ENCODE measurements at regions of chr1 and their contacts with region 1.

Region 1: GRCh38 chr1:100459358-100460114 is 78.4 kb upstream of the GPR88 start:
- DNase-seq: peak; percentile 83
- ATAC-seq: peak; percentile 92
- H3K4me3 Mint-ChIP-seq: peak overlapping the region; percentile 37
- H3K27ac Mint-ChIP-seq: peak overlapping the region; percentile 69
- H3K4me1 Mint-ChIP-seq: peaks cover 57% of the 10 kb centered on the region
- H3K27me3 Mint-ChIP-seq: no peaks in the 10 kb centered on the region

Region 2: GRCh38 chr1:100352267-100353070 is 107.1 kb before region 1 on chr1 and contains the start of gene CDC14A:
- CTCF ChIA-PET with region 1: interaction called, 18 read pairs
- DNase-seq: peak; percentile 95
- ATAC-seq: peak; percentile 69
- H3K4me3 Mint-ChIP-seq: peak within 1 kb of the TSS; percentile 93
- H3K27ac Mint-ChIP-seq: peak within 1 kb of the TSS; percentile 98
- H3K4me1 Mint-ChIP-seq: peaks cover 35% of the 10 kb centered on the region
- H3K27me3 Mint-ChIP-seq: no peaks in the 10 kb centered on the region
- total RNA-seq, gene CDC14A: 34.2 to 43.1 TPM

Region 3: GRCh38 chr1:100443811-100444571 is 15.5 kb before region 1 on chr1:
- CTCF ChIA-PET with region 1: interaction called, 20 read pairs
- DNase-seq: peak; percentile 60
- ATAC-seq: peak; percentile 65
- H3K4me3 Mint-ChIP-seq: peak overlapping the region; percentile 78
- H3K27ac Mint-ChIP-seq: peak overlapping the region; percentile 95
- H3K4me1 Mint-ChIP-seq: peaks cover 82% of the 10 kb centered on the region
- H3K27me3 Mint-ChIP-seq: no peaks in the 10 kb centered on the region

Region 4: GRCh38 chr1:100543640-100544039 is 84.1 kb after region 1 on chr1:
- CTCF ChIA-PET with region 1: interaction called, 16 read pairs
- DNase-seq: peak; percentile 62
- ATAC-seq: peak; percentile 37
- H3K4me3 Mint-ChIP-seq: no peak overlapping the region
- H3K27ac Mint-ChIP-seq: no peak overlapping the region
- H3K4me1 Mint-ChIP-seq: peaks cover 11% of the 10 kb centered on the region
- H3K27me3 Mint-ChIP-seq: peaks cover 46% of the 10 kb centered on the region

Region 5: DNA sequence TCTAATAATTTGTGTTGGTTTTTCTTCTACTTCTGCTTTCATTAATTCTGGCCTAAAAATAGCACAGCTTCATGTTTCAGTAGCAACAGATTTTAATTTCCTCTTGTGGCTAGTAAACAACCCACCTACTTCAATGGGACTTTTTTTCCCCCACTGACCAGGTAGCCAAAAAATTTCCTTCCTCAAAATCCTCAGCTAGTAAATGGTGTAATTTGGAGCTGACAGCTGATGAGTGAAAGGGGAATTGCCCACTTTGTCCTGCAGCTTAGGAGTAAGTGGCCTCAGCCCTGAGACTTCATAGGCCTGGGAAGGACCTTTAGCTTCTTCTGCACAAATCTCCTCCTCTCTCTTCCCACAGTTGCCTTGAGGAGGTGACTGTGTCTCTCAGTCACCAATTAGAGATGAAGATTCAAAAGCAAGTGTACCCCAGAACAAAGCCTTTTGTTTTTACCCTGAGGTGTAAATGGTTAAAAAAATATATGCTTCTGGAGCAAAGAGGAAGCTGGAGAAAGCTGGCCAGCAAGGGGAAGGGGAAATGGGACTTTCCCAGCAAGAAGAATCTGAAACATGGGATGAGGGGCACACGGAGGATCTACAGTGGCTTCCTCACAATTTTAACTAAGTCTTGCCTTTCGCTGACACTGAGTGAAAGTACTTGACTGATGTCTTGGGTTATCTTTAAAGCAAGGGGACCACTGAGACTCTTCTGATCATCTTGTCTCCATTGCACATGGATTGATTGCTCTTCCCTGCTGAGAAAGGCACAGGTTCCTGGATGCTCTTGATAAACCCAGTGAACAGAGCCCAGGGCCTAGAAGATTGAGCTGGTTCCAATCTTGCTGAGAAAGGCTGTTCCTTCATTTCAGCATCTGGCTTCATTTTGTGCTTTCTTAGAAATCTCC is 224.2 kb after region 1 on chr1:
- CTCF ChIA-PET with region 1: no interaction called
- DNase-seq: no peak
- ATAC-seq: no peak
- H3K4me3 Mint-ChIP-seq: no peak overlapping the region
- H3K27ac Mint-ChIP-seq: no peak overlapping the region
- H3K4me1 Mint-ChIP-seq: no peaks in the 10 kb centered on the region
- H3K27me3 Mint-ChIP-seq: peaks cover 11% of the 10 kb centered on the region

Measured in activated CD8-positive, alpha-beta memory T cell treated with anti-CD3 and anti-CD28 coated beads, Interleukin-2, amount 10 ng/mL, durations not matched to agents 7 days and 5 days (primary cell).